ENCODE measurements at regions of chr5 and their contacts with region 1.

Region 1: GRCh38 chr5:109688971-109689739 is 572 bp upstream of the MAN2A1 start:
- DNase-seq: peak; percentile 69 to 83
- H3K4me3 ChIP-seq: peak overlapping the region; percentile 82 to 93 (median 89)
- H3K27ac ChIP-seq: peak overlapping the region; percentile 75; the same call in 1 of the 2 replicates
- H3K4me1 ChIP-seq: peaks cover 2 to 11% (median 7%) of the 10 kb centered on the region in 4 experiments; a peak in 4 of 7 replicates
- H3K27me3 ChIP-seq: no peaks in the 10 kb centered on the region
- CTCF ChIP-seq: peak in 1 of 3 experiments; percentile 10; a peak in 1 of 4 replicates
- EP300 ChIP-seq: no peak
- POLR2A ChIP-seq: peak; percentile 82 to 88
- RAD21 ChIP-seq: peak in 1 of 2 experiments; percentile 32; a peak in 2 of 4 replicates

Region 2: GRCh38 chr5:109645707-109646192 is 43.4 kb before region 1 on chr5:
- CTCF ChIA-PET with region 1: interaction called, 10 read pairs
- POLR2A ChIA-PET with region 1: no interaction called
- DNase-seq: peak in 1 of 2 experiments; percentile 51
- H3K4me3 ChIP-seq: no peak overlapping the region
- H3K27ac ChIP-seq: no peak overlapping the region
- H3K4me1 ChIP-seq: peaks cover 0 to 8% (median 5%) of the 10 kb centered on the region in 4 experiments; a peak in 5 of 7 replicates
- H3K27me3 ChIP-seq: no peaks in the 10 kb centered on the region
- CTCF ChIP-seq: no peak
- EP300 ChIP-seq: no peak
- POLR2A ChIP-seq: no peak
- RAD21 ChIP-seq: no peak

Region 3: DNA sequence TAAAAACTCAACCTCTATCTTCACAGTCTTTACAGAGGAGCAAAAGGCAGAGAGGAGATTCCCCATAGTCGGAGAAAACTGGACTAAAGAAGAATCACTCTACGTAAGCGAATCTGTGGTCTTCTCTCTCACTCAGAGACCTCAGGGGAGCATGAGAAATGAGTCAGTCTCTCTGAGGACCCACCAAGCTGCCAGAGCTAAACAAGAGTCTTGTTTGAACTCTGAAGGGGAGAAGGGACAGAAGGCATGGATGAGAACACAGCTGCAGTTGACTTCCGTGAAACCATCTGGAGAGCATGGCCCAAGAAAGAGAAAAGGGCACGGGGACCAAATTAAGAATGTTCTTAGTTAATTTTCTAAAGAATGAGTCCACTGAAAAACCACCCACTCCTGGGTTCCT is 12.2 kb before region 1 on chr5:
- CTCF ChIA-PET with region 1: interaction called, 37 read pairs
- POLR2A ChIA-PET with region 1: interaction called, 5 read pairs
- DNase-seq: no peak
- H3K4me3 ChIP-seq: no peak overlapping the region
- H3K27ac ChIP-seq: no peak overlapping the region
- H3K4me1 ChIP-seq: no peaks in the 10 kb centered on the region; a peak in 1 of 7 replicates
- H3K27me3 ChIP-seq: no peaks in the 10 kb centered on the region
- CTCF ChIP-seq: no peak
- EP300 ChIP-seq: no peak
- POLR2A ChIP-seq: no peak
- RAD21 ChIP-seq: no peak

Region 4: GRCh38 chr5:109703829-109704228 is 14.7 kb after region 1 on chr5:
- CTCF ChIA-PET with region 1: interaction called, 11 read pairs
- POLR2A ChIA-PET with region 1: interaction called, 12 read pairs
- DNase-seq: no peak
- H3K4me3 ChIP-seq: no peak overlapping the region
- H3K27ac ChIP-seq: no peak overlapping the region
- H3K4me1 ChIP-seq: peaks cover 4 to 15% (median 10%) of the 10 kb centered on the region in 4 experiments; a peak in 6 of 7 replicates
- H3K27me3 ChIP-seq: no peaks in the 10 kb centered on the region
- CTCF ChIP-seq: no peak
- EP300 ChIP-seq: no peak
- POLR2A ChIP-seq: no peak
- RAD21 ChIP-seq: no peak

Measured in H1 (cell line).